PC-9 (cell line): ENCODE measurements at regions of chr1 and their contacts with region 1.

Region 1: GRCh38 chr1:183720028-183720427 is 66.9 kb upstream of the APOBEC4 start:
- DNase-seq: peak in 1 of 2 experiments; percentile 42
- H3K4me3 ChIP-seq: no peak overlapping the region
- H3K27ac ChIP-seq: no peak overlapping the region
- H3K4me1 ChIP-seq: peaks cover 19% of the 10 kb centered on the region
- H3K27me3 ChIP-seq: no peaks in the 10 kb centered on the region
- CTCF ChIP-seq: no peak

Region 2: DNA sequence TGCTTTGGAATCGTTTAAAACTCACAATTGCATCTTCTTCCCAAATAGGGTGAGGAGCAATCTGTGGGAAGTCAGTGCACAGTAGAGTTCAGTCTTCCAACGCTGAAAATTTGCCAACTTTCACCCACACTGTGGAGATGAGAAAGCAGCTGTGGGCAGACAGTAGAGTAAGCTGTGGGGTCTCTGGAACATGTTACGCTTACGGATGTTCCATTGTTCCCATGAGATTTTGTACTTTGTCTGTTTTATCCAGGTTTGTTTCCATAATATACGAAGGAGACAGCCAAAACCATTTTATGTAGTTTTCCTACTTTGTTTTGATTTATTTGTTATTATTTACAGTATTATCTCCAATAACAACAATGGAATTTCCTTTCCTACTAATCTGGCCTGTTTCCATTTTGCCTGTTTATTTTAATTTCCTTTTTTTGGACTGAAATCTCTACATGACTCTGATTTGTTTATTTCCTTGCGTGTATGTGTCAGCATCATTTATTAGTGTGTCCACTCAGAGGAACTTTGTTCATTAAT is 19.8 kb after region 1 on chr1:
- CTCF ChIA-PET with region 1: interaction called, 15 read pairs
- POLR2A ChIA-PET with region 1: no interaction called
- intact Hi-C with region 1: no loop called
- DNase-seq: no peak
- H3K4me3 ChIP-seq: no peak overlapping the region
- H3K27ac ChIP-seq: no peak overlapping the region
- H3K4me1 ChIP-seq: peaks cover 23% of the 10 kb centered on the region
- H3K27me3 ChIP-seq: no peaks in the 10 kb centered on the region
- CTCF ChIP-seq: no peak